Right ventricle myocardium inferior (tissue), 1 donor: ENCODE measurements at regions of chr19 and their contacts with region 1.

Region 1: DNA sequence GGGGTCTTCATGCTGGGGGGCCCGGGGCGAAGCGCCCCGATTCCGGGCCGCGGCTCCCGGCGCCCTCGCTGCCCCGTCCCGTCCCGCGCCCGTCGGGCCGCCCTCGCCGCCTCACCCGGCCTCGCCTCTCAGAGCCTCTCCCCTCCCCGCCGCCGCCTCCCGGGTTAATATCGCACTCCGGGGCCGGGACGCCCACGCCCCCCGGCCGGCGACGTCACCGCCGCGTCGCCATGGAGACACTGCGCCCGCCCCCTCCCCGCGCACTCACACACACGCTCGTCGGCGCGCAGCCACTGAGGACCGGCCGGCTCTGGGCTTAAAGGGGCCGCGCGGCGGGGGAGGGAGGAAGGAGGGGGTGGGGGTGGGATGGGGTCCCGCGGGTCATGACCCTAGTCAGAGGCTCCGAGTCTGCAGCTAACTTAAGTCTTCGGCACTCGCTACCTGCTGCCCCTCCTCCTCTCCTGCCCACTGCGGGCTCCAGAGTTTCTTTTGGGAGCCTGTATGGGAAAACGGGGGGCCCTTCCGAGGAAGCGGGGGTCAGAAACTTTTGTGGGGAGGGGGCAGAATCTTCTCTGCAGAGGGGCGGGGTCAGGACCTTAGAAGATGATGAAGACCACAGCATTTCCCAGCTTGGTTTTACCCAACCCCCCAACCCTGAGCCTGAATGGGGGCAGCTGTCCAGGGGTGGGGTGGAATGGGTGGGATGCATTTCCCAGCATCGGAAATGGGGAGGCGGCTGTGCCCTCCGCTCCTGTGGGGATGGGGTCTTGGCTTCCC is at the start of gene ERF:
- DNase-seq: peak; percentile 98
- ATAC-seq: peak; percentile 85
- total RNA-seq, gene ERF: 44.4 TPM

Region 2: GRCh38 chr19:42108527-42109389 is 146.4 kb before region 1 on chr19:
- intact Hi-C with region 1: no loop called
- DNase-seq: peak; percentile 89
- ATAC-seq: peak; percentile 78

Region 3: DNA sequence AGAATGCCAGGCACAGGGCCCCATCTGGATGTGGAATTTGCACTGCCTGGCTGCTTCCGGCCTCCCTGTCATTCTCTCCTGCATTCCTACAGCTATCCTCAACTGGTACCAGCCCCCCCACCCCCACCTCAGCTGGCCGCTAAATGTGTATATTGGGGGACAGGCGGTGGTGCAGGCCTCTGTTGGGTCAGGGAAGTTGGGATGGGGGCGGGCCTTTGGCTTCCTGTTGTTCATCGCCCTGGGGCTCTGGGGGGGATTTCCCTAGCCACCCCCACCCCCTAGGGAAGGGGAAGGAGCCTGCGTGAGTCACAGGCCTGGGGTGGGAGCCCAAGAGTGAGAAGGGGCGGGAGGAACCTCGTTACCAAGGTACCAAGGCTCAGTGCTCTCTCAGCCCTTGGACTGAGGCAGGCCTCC is 133.5 kb before region 1 on chr19:
- intact Hi-C with region 1: no loop called
- DNase-seq: peak; percentile 78
- ATAC-seq: peak; percentile 58

Region 4: GRCh38 chr19:42268704-42269477 is 13.7 kb after region 1 on chr19 and contains the start of gene CIC:
- intact Hi-C with region 1: loop called (anchors 2 kb)
- DNase-seq: peak; percentile 99
- ATAC-seq: peak; percentile 93
- total RNA-seq, gene CIC: 34.6 TPM

Region 5: DNA sequence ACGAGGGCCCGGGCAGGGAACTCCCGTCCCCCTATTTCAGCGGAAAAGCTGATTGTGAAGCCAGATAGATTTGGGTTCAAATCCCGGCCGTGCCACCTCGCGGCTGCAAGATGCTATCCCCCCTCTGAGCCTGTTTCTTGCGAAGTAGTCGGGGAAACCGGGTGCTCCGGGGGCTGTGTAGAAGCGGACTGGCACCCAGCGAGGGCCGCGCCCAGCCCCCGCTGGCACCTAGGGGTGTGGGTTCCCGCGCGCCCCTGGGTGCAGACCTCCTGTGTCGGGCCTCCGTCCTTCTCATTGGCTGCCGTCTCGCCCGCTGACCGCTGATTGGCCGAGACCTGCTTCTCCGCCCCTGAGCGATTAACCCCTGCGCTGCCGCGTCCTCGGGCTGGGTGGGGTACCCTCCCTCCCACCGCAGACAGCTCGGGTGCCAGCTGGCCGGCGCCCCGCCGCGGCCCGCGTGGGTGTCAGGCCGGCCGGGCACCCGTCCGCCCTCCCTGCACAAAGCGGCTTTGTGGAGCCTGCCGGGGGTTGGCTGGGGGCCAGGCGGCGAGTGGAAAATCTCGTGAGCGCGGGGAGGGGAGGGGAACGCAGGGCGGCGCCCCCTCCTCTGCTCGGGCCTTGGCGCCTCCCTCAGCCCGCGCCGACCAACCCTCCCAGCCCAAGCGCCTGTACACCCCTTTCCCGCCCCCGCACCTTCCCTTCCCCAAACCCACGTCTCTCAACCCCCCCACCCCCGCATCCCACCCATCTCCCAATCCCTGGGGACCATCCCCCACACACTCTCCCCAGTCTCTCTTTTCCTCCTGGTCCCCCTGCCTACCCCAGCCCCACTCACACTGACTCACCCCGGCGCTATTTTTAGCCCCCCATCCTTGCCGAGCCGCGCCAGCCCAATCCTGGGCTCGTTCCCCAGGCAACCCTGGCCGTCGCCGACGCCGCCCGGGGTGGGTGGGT is 25.3 kb after region 1 on chr19:
- intact Hi-C with region 1: loop called (anchors 1 kb)
- DNase-seq: peak; percentile 95
- ATAC-seq: peak; percentile 71

Region 6: GRCh38 chr19:42423462-42424344 is 168.5 kb after region 1 on chr19:
- intact Hi-C with region 1: loop called (anchors 5 kb)
- DNase-seq: peak; percentile 92
- ATAC-seq: peak; percentile 91